ENCODE measurements at regions of chr9 and their contacts with region 1.

Region 1: GRCh38 chr9:17793713-17794622 is 215.1 kb downstream of the SH3GL2 start:
- DNase-seq: no peak

Region 2: DNA sequence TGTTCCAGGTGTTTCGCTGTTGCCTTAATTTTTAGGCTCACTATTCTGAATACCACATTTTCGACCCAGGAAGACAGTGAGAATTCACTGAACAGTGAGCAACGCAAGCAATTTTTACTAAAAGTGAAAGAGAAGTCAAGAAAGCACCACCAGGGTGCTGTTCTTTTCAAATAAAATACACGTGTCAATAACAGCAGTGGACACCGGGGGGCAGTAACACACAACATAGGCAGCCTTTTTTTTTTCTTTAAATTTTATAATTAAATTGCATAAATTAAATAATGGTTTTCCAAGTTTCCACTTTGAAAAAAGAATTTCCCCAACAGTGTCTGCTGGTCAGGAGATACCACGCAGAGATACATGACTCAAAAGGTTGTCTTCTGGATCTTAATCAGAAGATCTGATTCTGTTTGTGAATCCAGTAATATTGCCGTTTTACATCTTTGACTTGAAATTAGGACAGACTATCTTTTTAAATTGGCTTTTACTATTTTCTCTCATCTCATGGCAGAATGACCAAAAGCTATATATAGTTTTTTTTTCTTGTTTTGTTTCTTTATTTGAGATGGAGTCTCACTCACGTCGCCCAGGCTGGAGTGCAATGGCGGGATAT is 262.2 kb before region 1 on chr9:
- in situ Hi-C with region 1: loop called (anchors 25 kb)
- DNase-seq: peak; percentile 49

Region 3: GRCh38 chr9:17986595-17986994 is 192.6 kb after region 1 on chr9:
- in situ Hi-C with region 1: no loop called
- DNase-seq: no peak